Activated naive CD4-positive, alpha-beta T cell treated with anti-CD3 and anti-CD28 coated beads for 36 hours (primary cell): ENCODE measurements at regions of chr19 and their contacts with region 1.

Region 1: DNA sequence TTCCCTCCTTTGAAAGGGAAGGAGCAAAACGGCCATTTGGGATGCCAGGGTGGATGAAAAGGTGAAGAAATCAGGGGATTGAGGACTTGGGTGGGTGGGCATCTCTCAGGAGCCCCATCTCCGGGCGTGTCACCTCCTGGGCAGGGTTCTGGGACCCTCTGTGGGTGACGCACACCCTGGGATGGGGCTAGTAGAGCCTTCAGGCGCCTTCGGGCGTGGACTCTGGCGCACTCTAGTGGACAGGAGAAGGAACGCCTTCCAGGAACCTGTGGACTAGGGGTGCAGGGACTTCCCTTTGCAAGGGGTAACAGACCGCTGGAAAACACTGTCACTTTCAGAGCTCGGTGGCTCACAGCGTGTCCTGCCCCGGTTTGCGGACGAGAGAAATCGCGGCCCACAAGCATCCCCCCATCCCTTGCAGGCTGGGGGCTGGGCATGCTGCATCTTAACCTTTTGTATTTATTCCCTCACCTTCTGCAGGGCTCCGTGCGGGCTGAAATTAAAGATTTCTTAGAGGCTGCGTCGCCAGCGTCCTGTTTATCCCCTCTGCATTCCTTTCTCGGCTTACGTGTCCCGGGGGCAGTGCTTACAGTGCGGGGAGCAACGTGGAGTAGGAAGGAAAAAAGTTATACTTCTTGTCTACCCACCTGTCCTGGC is 15.2 kb upstream of the S1PR4 start:
- DNase-seq: peak; percentile 82
- H3K4me3 Mint-ChIP-seq: no peak overlapping the region
- H3K27ac Mint-ChIP-seq: peak overlapping the region; percentile 59
- H3K4me1 Mint-ChIP-seq: peaks cover 26% of the 10 kb centered on the region
- H3K27me3 Mint-ChIP-seq: no peaks in the 10 kb centered on the region

Region 2: DNA sequence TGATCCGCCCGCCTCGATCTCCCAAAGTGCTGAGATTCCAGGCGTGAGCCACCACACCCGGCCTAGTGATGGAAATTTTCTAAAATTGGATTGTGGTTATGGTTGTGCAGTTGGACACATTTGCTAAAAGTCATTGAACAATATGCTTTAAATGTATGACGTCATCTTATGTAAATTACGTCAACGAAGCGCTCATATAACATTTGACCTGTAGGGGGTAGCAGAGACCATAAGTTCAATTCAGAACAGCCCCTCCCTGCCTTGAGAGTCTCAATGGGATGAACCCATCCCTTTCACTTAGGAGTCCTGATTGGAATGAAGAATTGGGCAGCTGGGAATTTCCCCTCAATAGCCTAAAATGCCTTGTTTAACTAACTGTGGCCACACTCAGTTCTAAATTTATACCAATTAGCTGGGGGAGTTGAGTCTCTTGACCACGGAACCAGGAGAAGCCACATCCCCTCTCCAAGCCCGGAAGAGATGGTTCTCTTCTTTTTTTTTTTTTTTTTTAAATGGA is 201.3 kb before region 1 on chr19:
- CTCF ChIA-PET with region 1: interaction called, 7 read pairs
- intact Hi-C with region 1: loop called (anchors 1 kb)
- DNase-seq: peak; percentile 58
- H3K4me3 Mint-ChIP-seq: peak overlapping the region; percentile 22
- H3K27ac Mint-ChIP-seq: no peak overlapping the region
- H3K4me1 Mint-ChIP-seq: peaks cover 3% of the 10 kb centered on the region
- H3K27me3 Mint-ChIP-seq: no peaks in the 10 kb centered on the region

Region 3: GRCh38 chr19:3007975-3008374 is 155.4 kb before region 1 on chr19:
- CTCF ChIA-PET with region 1: no interaction called
- intact Hi-C with region 1: no loop called
- DNase-seq: no peak
- H3K4me3 Mint-ChIP-seq: no peak overlapping the region
- H3K27ac Mint-ChIP-seq: no peak overlapping the region
- H3K4me1 Mint-ChIP-seq: no peaks in the 10 kb centered on the region
- H3K27me3 Mint-ChIP-seq: no peaks in the 10 kb centered on the region

Region 4: GRCh38 chr19:3075895-3076431 is 87.4 kb before region 1 on chr19:
- CTCF ChIA-PET with region 1: interaction called, 8 read pairs
- intact Hi-C with region 1: loop called (anchors 1 kb)
- DNase-seq: peak; percentile 80
- H3K4me3 Mint-ChIP-seq: peak overlapping the region; percentile 38
- H3K27ac Mint-ChIP-seq: no peak overlapping the region
- H3K4me1 Mint-ChIP-seq: no peaks in the 10 kb centered on the region
- H3K27me3 Mint-ChIP-seq: no peaks in the 10 kb centered on the region

Region 5: GRCh38 chr19:3146677-3147100 is 16.7 kb before region 1 on chr19:
- CTCF ChIA-PET with region 1: interaction called, 13 read pairs
- intact Hi-C with region 1: loop called (anchors 1 kb)
- DNase-seq: peak; percentile 83
- H3K4me3 Mint-ChIP-seq: no peak overlapping the region
- H3K27ac Mint-ChIP-seq: no peak overlapping the region
- H3K4me1 Mint-ChIP-seq: peaks cover 18% of the 10 kb centered on the region
- H3K27me3 Mint-ChIP-seq: no peaks in the 10 kb centered on the region